PC-9 (cell line): ENCODE measurements at regions of chr6 and their contacts with region 1.

Region 1: GRCh38 chr6:96194675-96195074 is 178.9 kb downstream of the FUT9 start:
- DNase-seq: no peak
- H3K4me3 ChIP-seq: no peak overlapping the region
- H3K27ac ChIP-seq: no peak overlapping the region
- H3K4me1 ChIP-seq: peaks cover 22% of the 10 kb centered on the region
- H3K27me3 ChIP-seq: no peaks in the 10 kb centered on the region
- CTCF ChIP-seq: no peak

Region 2: GRCh38 chr6:96015518-96016333 is 178.9 kb before region 1 on chr6 and contains the start of gene FUT9:
- CTCF ChIA-PET with region 1: no interaction called
- POLR2A ChIA-PET with region 1: no interaction called
- intact Hi-C with region 1: loop called (anchors 5 kb)
- DNase-seq: peak; percentile 72 to 81
- H3K4me3 ChIP-seq: peak within 1 kb of the TSS; percentile 80
- H3K27ac ChIP-seq: peak within 1 kb of the TSS; percentile 31
- H3K4me1 ChIP-seq: peaks cover 32% of the 10 kb centered on the region
- H3K27me3 ChIP-seq: no peaks in the 10 kb centered on the region
- CTCF ChIP-seq: peak; percentile 48; the same call in 1 of the 2 replicates
- total RNA-seq, gene FUT9: 5.2 and 6.9 TPM in 2 replicates

Region 3: DNA sequence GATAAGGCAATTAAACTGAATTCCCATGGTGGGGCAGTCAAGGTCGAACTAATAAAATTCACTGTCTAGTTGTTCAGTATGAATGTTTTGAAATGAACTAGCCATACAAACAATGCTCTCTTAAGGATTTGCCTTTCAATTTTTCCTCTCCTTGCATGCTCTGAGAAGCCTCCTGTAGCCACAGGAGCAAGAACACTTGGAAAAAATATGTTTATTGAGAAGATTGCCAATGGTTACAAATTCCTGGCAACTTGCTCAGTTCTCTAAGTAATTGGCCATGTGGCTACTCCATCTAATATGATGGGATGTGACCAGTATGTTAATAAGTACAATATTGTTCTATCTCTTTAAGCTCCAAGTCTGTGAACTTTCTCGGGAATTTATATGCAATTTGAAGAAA is 129.5 kb before region 1 on chr6:
- CTCF ChIA-PET with region 1: no interaction called
- POLR2A ChIA-PET with region 1: no interaction called
- intact Hi-C with region 1: loop called (anchors 5 kb)
- DNase-seq: no peak
- H3K4me3 ChIP-seq: no peak overlapping the region
- H3K27ac ChIP-seq: no peak overlapping the region
- H3K4me1 ChIP-seq: peaks cover 17% of the 10 kb centered on the region
- H3K27me3 ChIP-seq: no peaks in the 10 kb centered on the region
- CTCF ChIP-seq: no peak

Region 4: DNA sequence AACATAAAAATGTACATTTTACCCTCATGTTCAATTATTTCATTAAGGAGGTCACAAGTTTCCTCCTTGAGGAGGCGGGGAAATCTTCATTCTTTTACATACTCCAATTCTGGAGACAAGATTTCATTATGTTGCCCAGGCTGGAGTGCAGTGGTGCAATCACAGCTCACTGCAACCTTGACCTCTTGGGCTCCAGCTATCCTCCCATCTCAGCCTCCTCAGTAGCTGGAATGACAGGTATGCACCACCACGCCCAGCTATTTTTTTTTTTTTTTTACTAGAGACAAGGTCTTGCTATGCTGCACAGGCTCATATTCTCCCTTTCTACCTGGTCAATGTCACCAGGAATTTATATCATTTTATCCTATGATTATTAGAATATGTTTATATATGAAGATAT is 93.1 kb before region 1 on chr6:
- CTCF ChIA-PET with region 1: no interaction called
- POLR2A ChIA-PET with region 1: no interaction called
- intact Hi-C with region 1: loop called (anchors 1 kb)
- DNase-seq: peak in 1 of 2 experiments; percentile 11
- H3K4me3 ChIP-seq: no peak overlapping the region
- H3K27ac ChIP-seq: no peak overlapping the region
- H3K4me1 ChIP-seq: peaks cover 31% of the 10 kb centered on the region
- H3K27me3 ChIP-seq: no peaks in the 10 kb centered on the region
- CTCF ChIP-seq: no peak